ENCODE measurements at regions of chr1 and their contacts with region 1.

Region 1: DNA sequence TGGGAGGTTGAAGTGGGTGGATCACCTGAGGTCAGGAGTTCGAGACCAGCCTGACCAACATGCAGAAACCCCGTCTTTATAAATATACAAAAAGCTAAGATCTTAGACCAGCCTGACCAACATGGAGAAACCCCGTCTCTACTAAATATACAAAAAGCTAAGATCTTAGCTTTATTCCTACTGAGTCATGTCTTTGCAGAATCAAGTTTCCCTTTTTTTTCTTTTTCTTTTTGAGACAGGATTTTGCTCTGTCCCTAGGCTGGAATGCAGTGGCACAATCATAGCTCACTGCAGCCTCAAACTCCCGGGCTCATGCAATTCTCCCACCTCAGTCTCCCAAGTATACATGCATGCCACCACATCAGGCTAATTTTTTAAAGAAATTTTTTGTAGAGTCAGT is 21.4 kb downstream of the KDM5B start:
- DNase-seq: no peak
- ATAC-seq: no peak
- H3K4me3 ChIP-seq: no peak overlapping the region
- H3K27ac ChIP-seq: no peak overlapping the region
- H3K4me1 ChIP-seq: peaks cover 4% of the 10 kb centered on the region; the same call in 1 of the 2 replicates
- H3K27me3 ChIP-seq: no peaks in the 10 kb centered on the region
- CTCF ChIP-seq: no peak

Region 2: DNA sequence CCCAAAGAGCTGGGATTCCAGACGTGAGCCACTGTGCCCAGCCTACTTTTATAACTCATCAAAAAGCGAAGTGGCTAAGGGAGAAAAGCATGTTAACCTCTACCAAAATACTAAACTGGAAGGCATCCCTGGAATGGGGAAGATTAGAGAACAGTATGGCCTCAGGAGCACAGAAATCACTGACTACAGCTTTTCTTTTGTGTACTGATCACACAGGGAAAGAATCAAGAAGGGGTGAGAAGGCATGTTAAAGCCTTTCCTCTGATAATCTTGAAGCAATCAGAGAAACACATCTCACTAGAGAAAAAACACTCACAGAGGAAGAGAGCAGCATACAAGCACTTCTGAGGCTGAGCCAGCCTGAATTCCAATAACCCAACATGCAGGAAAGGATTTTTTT is 34.6 kb after region 1 on chr1:
- CTCF ChIA-PET with region 1: no interaction called
- POLR2A ChIA-PET with region 1: interaction called, 10 read pairs
- in situ Hi-C with region 1: no loop called
- intact Hi-C with region 1: no loop called
- DNase-seq: no peak
- ATAC-seq: no peak
- H3K4me3 ChIP-seq: no peak overlapping the region
- H3K27ac ChIP-seq: no peak overlapping the region
- H3K4me1 ChIP-seq: no peaks in the 10 kb centered on the region
- H3K27me3 ChIP-seq: no peaks in the 10 kb centered on the region
- CTCF ChIP-seq: no peak